AG04449 (cell line): ENCODE measurements at regions of chr6 and their contacts with region 1.

Region 1: GRCh38 chr6:63802606-63803206 is 167.1 kb downstream of the PHF3 start:
- DNase-seq: no peak
- H3K4me3 ChIP-seq: no peak overlapping the region
- CTCF ChIP-seq: peak; percentile 38

Region 2: GRCh38 chr6:63307581-63308246 is 495.0 kb before region 1 on chr6:
- CTCF ChIA-PET with region 1: interaction called, 52 read pairs
- POLR2A ChIA-PET with region 1: no interaction called
- DNase-seq: no peak
- H3K4me3 ChIP-seq: no peak overlapping the region
- CTCF ChIP-seq: peak; percentile 54

Region 3: GRCh38 chr6:63573140-63573898 is 229.4 kb before region 1 on chr6:
- CTCF ChIA-PET with region 1: interaction called, 15 read pairs
- POLR2A ChIA-PET with region 1: no interaction called
- DNase-seq: peak; percentile 12
- H3K4me3 ChIP-seq: peak overlapping the region; percentile 81
- CTCF ChIP-seq: no peak

Region 4: DNA sequence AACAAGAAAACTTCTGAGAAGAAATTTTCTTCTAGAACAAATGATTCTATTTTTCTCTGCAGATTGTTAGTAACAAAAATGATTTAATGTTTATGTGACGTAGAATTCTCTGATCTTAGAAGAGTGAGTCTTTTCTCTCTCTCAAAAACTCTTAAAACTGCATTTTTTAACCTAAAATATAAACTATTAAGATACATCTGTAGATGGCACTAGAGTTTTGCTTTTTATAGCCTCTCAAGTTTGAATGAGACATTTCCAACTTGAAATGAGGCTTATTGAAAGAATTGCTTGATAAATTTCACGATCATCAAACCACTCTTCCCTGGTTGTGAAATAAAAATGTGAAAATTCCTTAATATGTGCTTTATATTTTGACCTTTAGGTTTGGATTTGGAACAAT is 113.3 kb before region 1 on chr6:
- CTCF ChIA-PET with region 1: interaction called, 10 read pairs
- POLR2A ChIA-PET with region 1: no interaction called
- DNase-seq: no peak
- H3K4me3 ChIP-seq: no peak overlapping the region
- CTCF ChIP-seq: no peak

Region 5: GRCh38 chr6:63783096-63783495 is 19.6 kb before region 1 on chr6:
- CTCF ChIA-PET with region 1: interaction called, 25 read pairs
- POLR2A ChIA-PET with region 1: no interaction called
- DNase-seq: no peak
- H3K4me3 ChIP-seq: no peak overlapping the region
- CTCF ChIP-seq: no peak

Region 6: GRCh38 chr6:63816982-63817436 is 14.3 kb after region 1 on chr6:
- CTCF ChIA-PET with region 1: interaction called, 32 read pairs
- POLR2A ChIA-PET with region 1: interaction called, 4 read pairs
- DNase-seq: no peak
- H3K4me3 ChIP-seq: no peak overlapping the region
- CTCF ChIP-seq: peak; percentile 22